CD8-positive, alpha-beta T cell (primary cell): ENCODE measurements at regions of chrX and their contacts with region 1.

Region 1: DNA sequence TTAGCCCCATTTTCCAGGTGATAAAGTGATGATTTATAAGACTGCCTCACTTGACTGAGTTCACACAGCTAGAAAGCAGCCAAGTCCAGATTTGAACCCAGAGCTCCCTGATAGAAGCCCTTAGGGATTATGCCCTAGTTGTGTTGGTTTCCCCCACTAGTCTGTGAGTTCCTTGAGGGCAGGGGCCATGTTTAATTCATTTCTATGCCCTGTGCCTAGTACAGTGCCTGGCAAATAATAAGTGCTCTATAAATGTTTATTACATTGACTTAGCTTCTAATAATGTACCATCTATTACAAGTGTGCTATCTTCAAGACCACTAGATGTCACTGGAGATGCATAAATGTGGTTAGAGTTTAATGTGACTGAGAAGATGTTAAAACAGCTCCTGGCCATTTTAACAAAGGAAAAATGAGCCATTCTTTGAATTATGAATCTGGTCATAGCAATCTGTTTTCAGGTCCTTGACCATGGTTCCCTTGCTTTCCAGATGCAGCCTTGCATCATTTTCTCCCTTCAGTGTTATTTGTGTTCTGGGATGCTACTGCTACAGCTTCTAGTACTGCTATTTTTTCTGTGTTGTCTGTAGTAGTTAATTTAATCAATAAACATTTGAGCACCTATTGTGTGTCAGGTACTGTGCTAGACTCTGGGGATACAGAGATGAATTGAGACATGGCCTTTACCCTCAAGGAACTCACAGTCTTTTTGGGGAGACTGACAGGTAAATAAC is 43.2 kb downstream of the SLC9A6 start:
- DNase-seq: peak in 2 of 9 experiments; percentile 52 to 68
- ATAC-seq: peak; percentile 42
- H3K4me3 ChIP-seq: no peak overlapping the region
- H3K4me3 Mint-ChIP-seq: no peak overlapping the region
- H3K27ac ChIP-seq: no peak overlapping the region
- H3K27ac Mint-ChIP-seq: no peak overlapping the region
- H3K4me1 ChIP-seq: no peaks in the 10 kb centered on the region
- H3K4me1 Mint-ChIP-seq: no peaks in the 10 kb centered on the region
- H3K27me3 ChIP-seq: no peaks in the 10 kb centered on the region
- H3K27me3 Mint-ChIP-seq: no peaks in the 10 kb centered on the region
- CTCF ChIP-seq: peak; percentile 55

Region 2: DNA sequence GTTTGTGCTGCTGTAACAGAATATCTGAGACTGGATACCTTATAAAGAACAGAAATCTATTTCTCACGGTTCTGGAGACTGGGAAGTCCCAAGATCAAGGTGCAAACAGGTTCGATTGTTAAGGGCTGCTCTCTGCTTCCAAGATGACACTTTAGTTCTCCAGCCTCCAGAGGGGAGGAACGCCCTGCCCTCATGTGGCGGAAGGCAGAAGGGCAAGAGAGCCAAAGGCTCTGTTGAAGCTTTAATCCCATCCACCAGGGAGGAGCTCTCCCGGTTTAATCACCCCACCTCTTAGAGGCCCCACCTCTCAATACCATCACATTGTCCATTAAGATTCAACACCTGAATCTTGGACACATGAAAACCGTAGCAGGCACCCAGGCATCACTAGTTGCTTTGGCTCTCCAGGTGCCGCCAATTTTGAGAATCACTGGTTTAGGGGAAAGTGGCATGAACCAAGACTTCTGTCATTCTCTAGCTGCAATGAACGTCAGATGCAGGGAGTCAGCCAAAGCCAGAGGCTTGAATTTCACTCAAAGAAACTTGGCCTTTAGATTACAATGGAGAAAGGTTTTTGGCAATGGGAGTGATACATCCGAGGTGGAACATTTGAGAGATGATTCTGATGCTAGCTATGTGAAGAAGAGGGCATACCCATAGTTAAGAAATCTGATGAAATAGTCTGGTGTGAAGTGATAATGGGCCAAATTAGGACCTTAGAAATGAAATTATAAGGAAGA is 134.6 kb after region 1 on chrX:
- CTCF ChIA-PET with region 1: interaction called, 51 read pairs
- POLR2A ChIA-PET with region 1: interaction called, 3 read pairs
- intact Hi-C with region 1: loop called (anchors 1 kb)
- DNase-seq: peak in 6 of 9 experiments; percentile 33 to 56 (median 39)
- ATAC-seq: peak; percentile 67
- H3K4me3 ChIP-seq: no peak overlapping the region
- H3K4me3 Mint-ChIP-seq: no peak overlapping the region
- H3K27ac ChIP-seq: no peak overlapping the region
- H3K27ac Mint-ChIP-seq: no peak overlapping the region
- H3K4me1 ChIP-seq: no peaks in the 10 kb centered on the region
- H3K4me1 Mint-ChIP-seq: peaks cover 2% of the 10 kb centered on the region
- H3K27me3 ChIP-seq: no peaks in the 10 kb centered on the region
- H3K27me3 Mint-ChIP-seq: no peaks in the 10 kb centered on the region
- CTCF ChIP-seq: peak; percentile 46

Region 3: GRCh38 chrX:136200466-136200865 is 172.0 kb after region 1 on chrX:
- CTCF ChIA-PET with region 1: interaction called, 13 read pairs
- POLR2A ChIA-PET with region 1: no interaction called
- intact Hi-C with region 1: no loop called
- DNase-seq: peak in 1 of 9 experiments; percentile 17
- ATAC-seq: no peak
- H3K4me3 ChIP-seq: no peak overlapping the region
- H3K4me3 Mint-ChIP-seq: no peak overlapping the region
- H3K27ac ChIP-seq: no peak overlapping the region
- H3K27ac Mint-ChIP-seq: no peak overlapping the region
- H3K4me1 ChIP-seq: peaks cover 16% of the 10 kb centered on the region
- H3K4me1 Mint-ChIP-seq: peaks cover 26% of the 10 kb centered on the region
- H3K27me3 ChIP-seq: no peaks in the 10 kb centered on the region
- H3K27me3 Mint-ChIP-seq: no peaks in the 10 kb centered on the region
- CTCF ChIP-seq: no peak

Region 4: DNA sequence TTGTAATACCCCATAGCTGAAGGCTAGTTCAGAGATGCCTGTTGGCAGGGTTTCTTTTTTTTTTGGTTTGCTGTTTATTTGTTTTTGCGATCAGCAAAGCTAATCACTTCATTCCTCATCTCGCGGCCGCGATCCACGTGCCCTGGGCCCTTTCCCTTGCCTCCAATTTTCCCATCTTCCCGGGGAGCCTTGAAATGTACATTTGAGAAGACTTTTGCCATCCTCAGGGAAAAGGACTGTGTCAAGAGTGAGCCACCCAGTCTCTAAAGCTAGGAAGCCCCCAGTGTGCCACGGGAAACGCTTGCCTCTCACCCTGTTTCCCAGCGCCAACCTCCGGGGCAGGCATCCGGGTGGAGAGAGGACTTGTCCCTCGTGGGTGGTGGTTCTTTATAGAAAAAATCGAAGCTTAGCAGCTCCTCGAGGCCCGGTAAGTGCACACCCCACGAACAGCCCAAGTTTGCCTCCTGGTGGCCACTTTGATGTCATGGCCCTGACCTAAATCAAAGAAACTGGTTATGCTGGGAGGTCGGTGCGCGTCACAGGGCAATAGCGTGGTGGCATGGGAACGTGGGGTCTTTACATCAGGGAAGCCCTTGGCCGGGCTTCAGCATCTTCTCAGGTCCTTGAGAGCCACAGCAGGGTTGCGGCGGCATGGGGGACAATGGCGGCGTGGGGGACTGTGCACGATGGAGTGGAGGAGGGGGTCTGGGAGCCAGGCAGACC is 180.8 kb after region 1 on chrX:
- CTCF ChIA-PET with region 1: interaction called, 27 read pairs
- POLR2A ChIA-PET with region 1: no interaction called
- intact Hi-C with region 1: loop called (anchors 1 to 5 kb)
- DNase-seq: peak in 5 of 9 experiments; percentile 13 to 59 (median 45)
- ATAC-seq: peak; percentile 49
- H3K4me3 ChIP-seq: no peak overlapping the region
- H3K4me3 Mint-ChIP-seq: no peak overlapping the region
- H3K27ac ChIP-seq: no peak overlapping the region
- H3K27ac Mint-ChIP-seq: no peak overlapping the region
- H3K4me1 ChIP-seq: peaks cover 5% of the 10 kb centered on the region
- H3K4me1 Mint-ChIP-seq: peaks cover 11% of the 10 kb centered on the region
- H3K27me3 ChIP-seq: no peaks in the 10 kb centered on the region
- H3K27me3 Mint-ChIP-seq: no peaks in the 10 kb centered on the region
- CTCF ChIP-seq: no peak

Region 5: GRCh38 chrX:136214551-136214950 is 186.1 kb after region 1 on chrX:
- CTCF ChIA-PET with region 1: interaction called, 27 read pairs
- POLR2A ChIA-PET with region 1: no interaction called
- intact Hi-C with region 1: loop called (anchors 1 to 5 kb)
- DNase-seq: no peak
- ATAC-seq: no peak
- H3K4me3 ChIP-seq: no peak overlapping the region
- H3K4me3 Mint-ChIP-seq: no peak overlapping the region
- H3K27ac ChIP-seq: no peak overlapping the region
- H3K27ac Mint-ChIP-seq: no peak overlapping the region
- H3K4me1 ChIP-seq: no peaks in the 10 kb centered on the region
- H3K4me1 Mint-ChIP-seq: no peaks in the 10 kb centered on the region
- H3K27me3 ChIP-seq: no peaks in the 10 kb centered on the region
- H3K27me3 Mint-ChIP-seq: no peaks in the 10 kb centered on the region
- CTCF ChIP-seq: no peak

Region 6: DNA sequence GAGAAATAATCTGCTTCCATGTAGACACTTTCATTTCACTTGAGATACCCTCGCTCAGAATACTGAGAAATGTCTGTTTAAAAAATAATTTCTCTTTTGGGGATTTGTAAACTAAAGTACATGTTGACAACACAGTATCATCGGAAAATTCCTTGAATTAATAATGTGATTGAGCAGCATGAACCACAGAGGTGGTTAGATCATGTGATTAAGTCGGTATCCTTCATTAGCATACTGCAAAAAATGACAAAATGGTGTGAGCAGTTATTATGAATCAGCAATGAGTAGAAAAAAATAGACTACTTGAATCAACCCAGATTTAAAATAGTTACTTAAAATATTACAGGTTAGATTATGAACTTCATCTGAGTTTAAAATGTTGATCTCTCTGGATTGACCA is 208.7 kb after region 1 on chrX:
- CTCF ChIA-PET with region 1: no interaction called
- POLR2A ChIA-PET with region 1: no interaction called
- intact Hi-C with region 1: no loop called
- DNase-seq: no peak
- ATAC-seq: no peak
- H3K4me3 ChIP-seq: no peak overlapping the region
- H3K4me3 Mint-ChIP-seq: no peak overlapping the region
- H3K27ac ChIP-seq: no peak overlapping the region
- H3K27ac Mint-ChIP-seq: no peak overlapping the region
- H3K4me1 ChIP-seq: no peaks in the 10 kb centered on the region
- H3K4me1 Mint-ChIP-seq: no peaks in the 10 kb centered on the region
- H3K27me3 ChIP-seq: no peaks in the 10 kb centered on the region
- H3K27me3 Mint-ChIP-seq: no peaks in the 10 kb centered on the region
- CTCF ChIP-seq: no peak

Region 7: DNA sequence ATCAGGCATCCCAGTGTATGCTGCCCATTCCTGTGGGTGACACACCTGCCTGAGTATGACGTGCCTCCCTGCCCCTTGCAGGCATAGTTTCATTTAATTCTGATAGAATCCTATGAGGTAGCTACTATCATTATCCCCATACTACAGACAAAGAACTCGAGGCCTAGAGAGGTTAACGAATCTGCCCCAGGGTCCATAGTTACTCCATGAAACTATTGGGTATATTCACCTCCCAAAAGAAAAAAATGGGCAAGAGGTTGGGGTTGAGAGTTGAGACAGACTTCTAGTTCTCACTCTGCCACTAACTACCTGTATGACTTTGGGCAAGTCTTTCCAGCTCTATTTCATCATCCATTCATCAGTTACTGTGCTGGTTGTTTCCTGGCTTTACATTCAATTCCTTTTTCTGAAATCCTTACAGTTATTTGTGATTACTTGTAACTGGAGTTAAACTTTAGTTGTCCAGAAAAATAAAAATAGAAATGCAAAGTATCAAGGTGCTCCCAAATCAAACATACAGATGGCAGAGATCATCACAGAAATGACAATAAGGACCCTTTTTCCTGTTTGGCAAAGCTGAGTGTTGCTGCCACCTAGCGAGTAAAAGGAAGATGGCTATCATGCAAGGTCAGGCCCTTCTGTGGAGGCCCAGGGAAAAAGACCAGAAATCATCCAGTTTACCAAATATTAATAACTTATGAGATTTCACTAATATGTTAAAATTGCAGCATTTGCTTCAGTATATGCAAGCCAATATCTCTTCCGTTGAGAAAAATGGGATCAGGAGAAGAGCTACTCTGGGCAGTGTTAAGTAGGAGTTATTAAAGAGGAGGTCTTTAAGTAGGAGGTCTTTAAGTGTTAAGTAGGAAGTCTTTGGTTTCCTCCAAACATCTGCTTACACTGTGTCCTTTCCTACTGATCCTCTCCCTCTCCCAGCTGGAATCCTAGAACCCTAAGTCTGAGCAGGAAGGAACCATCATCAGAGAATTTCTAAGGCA is 239.9 kb after region 1 on chrX:
- CTCF ChIA-PET with region 1: interaction called, 37 read pairs
- POLR2A ChIA-PET with region 1: no interaction called
- intact Hi-C with region 1: loop called (anchors 1 kb)
- DNase-seq: peak in 8 of 9 experiments; percentile 5 to 68 (median 46)
- ATAC-seq: peak; percentile 48
- H3K4me3 ChIP-seq: no peak overlapping the region
- H3K4me3 Mint-ChIP-seq: no peak overlapping the region
- H3K27ac ChIP-seq: no peak overlapping the region
- H3K27ac Mint-ChIP-seq: no peak overlapping the region
- H3K4me1 ChIP-seq: no peaks in the 10 kb centered on the region
- H3K4me1 Mint-ChIP-seq: peaks cover 5% of the 10 kb centered on the region
- H3K27me3 ChIP-seq: no peaks in the 10 kb centered on the region
- H3K27me3 Mint-ChIP-seq: no peaks in the 10 kb centered on the region
- CTCF ChIP-seq: peak; percentile 76